Heart right ventricle (tissue), 16 donors: ENCODE measurements at regions of chr16 and their contacts with region 1.

Region 1: DNA sequence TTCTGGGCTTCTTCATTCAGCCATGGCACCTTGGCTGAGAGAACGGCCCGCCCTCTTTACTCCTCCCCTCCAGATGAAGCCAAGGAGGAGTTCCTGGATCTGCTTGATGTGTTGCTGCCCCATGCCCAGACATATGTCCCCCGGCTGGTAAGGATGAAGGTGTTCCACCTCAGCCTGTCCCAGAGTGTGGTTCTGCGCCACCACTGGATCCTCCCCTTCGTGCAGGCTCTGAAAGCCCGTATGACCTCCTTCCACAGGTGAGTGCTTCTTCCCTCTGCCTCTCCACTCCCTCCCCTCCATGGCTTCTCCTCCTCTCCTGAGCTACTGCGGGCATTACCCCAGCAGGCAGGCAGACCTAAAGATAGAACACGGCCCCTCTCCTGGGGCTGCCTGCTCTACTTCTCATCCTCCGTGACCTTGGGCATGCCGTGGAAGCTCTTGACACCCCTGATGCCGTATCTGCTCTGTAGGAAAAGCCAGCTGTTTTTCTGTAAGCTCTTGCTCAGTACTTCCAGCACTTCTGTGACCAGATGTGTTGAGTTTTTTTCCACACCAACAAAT is 8.7 kb downstream of the USB1 start:
- DNase-seq: peak in 1 of 2 donors; percentile 21
- ATAC-seq: peak in 6 of 8 donors; percentile 19 to 76 (median 62)
- H3K4me3 ChIP-seq: no peak overlapping the region
- H3K27ac ChIP-seq: no peak overlapping the region
- H3K4me1 ChIP-seq: peaks cover 0 to 12% (median 3%) of the 10 kb centered on the region in 9 donors
- H3K27me3 ChIP-seq: no peaks in the 10 kb centered on the region
- CTCF ChIP-seq: no peak

Region 2: GRCh38 chr16:57576429-57576870 is 433.5 kb before region 1 on chr16:
- intact Hi-C with region 1: loop called in 3 of 10 experiments (anchors 5 to 10 kb)
- DNase-seq: peak; percentile 66 to 77
- ATAC-seq: peak in 7 of 8 donors; percentile 44 to 85 (median 79)
- H3K4me3 ChIP-seq: no peak overlapping the region
- H3K27ac ChIP-seq: no peak overlapping the region
- H3K4me1 ChIP-seq: peaks cover 0 to 10% (median 0%) of the 10 kb centered on the region in 9 donors
- H3K27me3 ChIP-seq: peaks cover 0 to 34% (median 10%) of the 10 kb centered on the region in 7 donors
- CTCF ChIP-seq: peak; percentile 87 to 98 (median 94)